CD4-positive, alpha-beta memory T cell (primary cell): ENCODE measurements at regions of chr1 and their contacts with region 1.

Region 1: DNA sequence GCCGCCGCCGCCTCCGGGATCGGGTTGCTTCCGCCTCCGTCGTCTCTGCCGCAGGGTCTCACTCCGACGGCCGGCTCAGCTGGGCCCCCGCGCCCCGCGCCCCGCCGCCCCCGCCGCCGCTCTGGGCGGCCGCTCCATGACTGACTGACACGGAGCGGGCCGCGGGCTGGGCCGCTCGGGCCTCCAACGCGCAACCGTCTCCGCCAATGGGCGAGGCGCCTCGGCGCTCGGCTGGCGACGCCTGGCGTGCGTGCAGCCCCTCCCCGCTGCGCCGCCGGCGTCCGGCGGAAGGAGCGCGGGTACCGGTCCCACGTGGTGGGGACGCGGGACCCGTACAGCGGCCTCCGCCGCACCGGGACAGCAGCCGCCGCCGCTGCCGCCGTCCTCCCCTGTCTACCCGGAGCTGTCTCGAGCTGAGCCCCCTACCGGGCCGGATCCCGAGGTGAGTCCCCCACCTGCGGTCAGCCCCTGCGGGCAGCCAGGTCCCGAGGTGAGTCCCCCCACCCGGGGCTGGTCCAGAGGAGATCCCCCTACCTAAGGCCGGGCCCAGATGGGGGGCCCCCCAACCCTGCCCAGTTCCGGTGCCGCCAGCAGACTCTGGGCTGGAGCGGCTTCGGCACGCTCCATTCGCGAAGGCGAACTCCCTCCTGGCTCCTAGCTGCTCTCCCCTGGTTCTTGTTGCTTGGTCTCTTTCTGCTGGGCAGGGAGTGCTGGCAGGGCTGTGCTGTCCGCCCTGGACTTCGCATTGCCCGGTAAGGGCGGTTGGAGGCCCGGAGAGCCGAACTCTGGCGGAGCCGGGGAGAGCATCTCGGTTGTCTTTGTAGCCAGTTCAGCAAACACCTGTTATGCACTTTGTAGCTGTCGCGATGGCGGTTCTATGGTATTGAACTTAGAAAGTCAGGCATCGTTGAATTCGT is at the starts of genes TAF5L and URB2:
- DNase-seq: peak; percentile 84 to 88 (median 87)
- H3K4me3 ChIP-seq: peak within 1 kb of the TSS; percentile 77 to 98
- H3K4me3 Mint-ChIP-seq: peak within 1 kb of the TSS; percentile 97 to 100 (median 99)
- H3K27ac ChIP-seq: peak within 1 kb of the TSS; percentile 63
- H3K27ac Mint-ChIP-seq: peak within 1 kb of the TSS; percentile 91 to 99 (median 97)
- H3K4me1 ChIP-seq: peaks cover 41% of the 10 kb centered on the region
- H3K4me1 Mint-ChIP-seq: peaks cover 33 to 67% (median 51%) of the 10 kb centered on the region in 4 donors
- H3K27me3 ChIP-seq: no peaks in the 10 kb centered on the region
- H3K27me3 Mint-ChIP-seq: no peaks in the 10 kb centered on the region
- total RNA-seq, gene TAF5L: 20.7 to 21.3 TPM
- total RNA-seq, gene URB2: 8.5 to 9.4 TPM

Region 2: GRCh38 chr1:229558571-229559335 is 67.4 kb before region 1 on chr1 and contains the start of gene ABCB10:
- CTCF ChIA-PET with region 1: interaction called, 37 read pairs
- POLR2A ChIA-PET with region 1: interaction called, 104 read pairs
- intact Hi-C with region 1: loop called (anchors 1 kb)
- DNase-seq: peak; percentile 79 to 90 (median 82)
- H3K4me3 ChIP-seq: peak within 1 kb of the TSS; percentile 24 to 76
- H3K4me3 Mint-ChIP-seq: peak within 1 kb of the TSS; percentile 92 to 98 (median 96)
- H3K27ac ChIP-seq: peak within 1 kb of the TSS; percentile 46
- H3K27ac Mint-ChIP-seq: peak within 1 kb of the TSS; percentile 89 to 98 (median 93)
- H3K4me1 ChIP-seq: peaks cover 37% of the 10 kb centered on the region
- H3K4me1 Mint-ChIP-seq: peaks cover 28 to 50% (median 39%) of the 10 kb centered on the region in 4 donors
- H3K27me3 ChIP-seq: no peaks in the 10 kb centered on the region
- H3K27me3 Mint-ChIP-seq: no peaks in the 10 kb centered on the region
- total RNA-seq, gene ABCB10: 19.7 to 20.2 TPM

Region 3: GRCh38 chr1:229792012-229792895 is 166.1 kb after region 1 on chr1:
- CTCF ChIA-PET with region 1: no interaction called
- POLR2A ChIA-PET with region 1: no interaction called
- intact Hi-C with region 1: no loop called
- DNase-seq: no peak
- H3K4me3 ChIP-seq: no peak overlapping the region
- H3K4me3 Mint-ChIP-seq: no peak overlapping the region
- H3K27ac ChIP-seq: no peak overlapping the region
- H3K27ac Mint-ChIP-seq: no peak overlapping the region
- H3K4me1 ChIP-seq: no peaks in the 10 kb centered on the region
- H3K4me1 Mint-ChIP-seq: no peaks in the 10 kb centered on the region
- H3K27me3 ChIP-seq: no peaks in the 10 kb centered on the region
- H3K27me3 Mint-ChIP-seq: peaks cover 8 to 10% of the 10 kb centered on the region in 2 donors

Region 4: DNA sequence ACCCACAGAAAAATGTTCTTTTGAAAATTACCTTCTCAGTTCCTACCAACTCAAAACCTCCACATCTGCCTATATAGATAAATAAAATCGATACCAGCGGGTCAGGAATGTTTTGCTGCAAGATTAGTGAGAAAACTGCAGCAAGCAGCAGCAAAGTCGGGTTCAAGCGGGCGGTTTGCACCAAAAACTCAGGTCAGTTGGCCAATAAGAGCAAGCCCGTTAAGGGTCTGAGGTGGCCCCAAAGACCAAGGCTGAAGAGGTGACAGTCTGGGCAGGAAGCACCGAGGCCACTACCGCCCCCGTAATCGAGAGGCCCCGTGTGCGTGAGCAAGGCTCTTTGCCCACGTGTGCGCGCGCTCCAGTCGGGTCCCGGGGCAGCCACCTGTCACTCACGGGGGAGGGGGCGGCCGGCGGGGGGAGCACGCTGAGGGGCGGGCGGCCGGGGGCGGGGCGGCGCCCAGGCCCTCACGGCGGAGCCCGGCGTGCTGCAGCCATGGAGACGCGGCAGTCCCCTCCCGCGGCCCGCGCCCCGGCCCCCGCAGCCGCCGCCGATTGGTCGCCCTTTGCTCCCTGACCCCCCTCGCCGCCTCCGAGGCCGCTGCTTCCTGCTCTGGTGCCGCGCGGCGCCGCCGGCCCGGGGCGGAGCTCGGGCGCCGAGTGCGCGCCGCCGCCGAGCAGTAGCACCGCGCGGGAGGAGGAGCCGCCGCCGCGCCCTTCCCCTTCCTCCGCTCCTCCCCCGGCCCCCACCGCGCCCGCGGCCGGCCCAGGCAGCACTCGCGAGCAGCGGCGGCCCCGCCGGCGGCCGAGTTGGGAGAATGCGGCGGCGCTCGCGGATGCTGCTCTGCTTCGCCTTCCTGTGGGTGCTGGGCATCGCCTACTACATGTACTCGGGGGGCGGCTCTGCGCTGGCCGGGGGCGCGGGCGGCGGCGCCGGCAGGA is 440.6 kb after region 1 on chr1 and contains the start of gene GALNT2:
- CTCF ChIA-PET with region 1: no interaction called
- POLR2A ChIA-PET with region 1: no interaction called
- intact Hi-C with region 1: loop called (anchors 1 kb)
- DNase-seq: peak; percentile 88 to 93 (median 91)
- H3K4me3 ChIP-seq: peak within 1 kb of the TSS; percentile 50 to 74
- H3K4me3 Mint-ChIP-seq: peak within 1 kb of the TSS; percentile 89 to 95 (median 92)
- H3K27ac ChIP-seq: peak within 1 kb of the TSS; percentile 60
- H3K27ac Mint-ChIP-seq: peak within 1 kb of the TSS; percentile 88 to 97 (median 94)
- H3K4me1 ChIP-seq: peaks cover 21% of the 10 kb centered on the region
- H3K4me1 Mint-ChIP-seq: peaks cover 20 to 35% (median 26%) of the 10 kb centered on the region in 4 donors
- H3K27me3 ChIP-seq: no peaks in the 10 kb centered on the region
- H3K27me3 Mint-ChIP-seq: no peaks in the 10 kb centered on the region
- total RNA-seq, gene GALNT2: 18.9 to 20.9 TPM